Pancreas (tissue), 10 donors: ENCODE measurements at regions of chr11 and their contacts with region 1.

Region 1: DNA sequence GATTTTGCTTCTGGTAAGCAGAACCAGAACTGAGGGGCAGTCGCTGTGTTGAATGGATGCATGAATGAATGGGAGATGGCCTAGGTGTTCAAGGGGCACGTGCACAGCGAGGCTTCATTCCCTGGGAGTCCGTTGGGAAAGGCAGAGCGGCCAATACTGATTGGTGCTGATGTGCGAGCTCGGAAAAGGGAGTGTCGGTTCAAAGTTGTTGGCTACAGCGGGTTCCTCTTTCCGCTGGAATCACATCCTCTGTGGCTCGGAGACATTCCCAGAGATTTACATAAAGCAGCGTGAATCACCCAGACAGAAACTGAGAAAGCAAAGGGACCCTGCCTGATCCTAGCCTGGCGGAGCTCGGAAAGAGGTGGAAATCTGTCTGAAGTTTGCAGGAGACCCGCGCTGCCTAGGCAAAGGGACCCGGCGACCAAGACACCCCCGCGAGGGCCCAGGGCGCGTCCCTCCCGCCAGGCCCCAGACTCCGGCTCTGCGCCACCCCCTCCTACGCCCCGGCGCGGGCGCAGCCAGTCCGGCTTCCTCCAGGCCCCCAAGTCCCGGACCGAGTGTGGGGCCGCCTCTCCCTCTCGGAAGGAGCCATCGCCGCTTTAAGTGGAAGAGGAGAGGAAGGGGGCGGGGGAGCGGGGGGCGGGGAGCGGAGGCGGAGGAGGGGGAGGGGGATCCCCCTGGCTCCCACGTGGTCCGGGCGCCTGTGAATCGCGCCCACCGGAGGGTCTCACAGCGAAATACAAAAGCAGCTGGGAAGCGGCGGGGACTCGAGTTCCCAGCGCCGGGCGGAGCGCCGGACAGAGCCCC is at the start of gene FJX1:
- DNase-seq: peak; percentile 28 to 76 (median 52)
- ATAC-seq: peak; percentile 32 to 60 (median 54)
- H3K4me3 ChIP-seq: peak within 1 kb of the TSS; percentile 48 to 70 (median 58)
- H3K27ac ChIP-seq: peak within 1 kb of the TSS in 3 of 4 donors; percentile 28 to 70 (median 68)
- H3K4me1 ChIP-seq: peaks cover 0 to 12% (median 0%) of the 10 kb centered on the region in 3 donors
- H3K27me3 ChIP-seq: no peaks in the 10 kb centered on the region
- CTCF ChIP-seq: no peak
- total RNA-seq, gene FJX1: 2.2 to 13.3 (median 3.8) TPM

Region 2: DNA sequence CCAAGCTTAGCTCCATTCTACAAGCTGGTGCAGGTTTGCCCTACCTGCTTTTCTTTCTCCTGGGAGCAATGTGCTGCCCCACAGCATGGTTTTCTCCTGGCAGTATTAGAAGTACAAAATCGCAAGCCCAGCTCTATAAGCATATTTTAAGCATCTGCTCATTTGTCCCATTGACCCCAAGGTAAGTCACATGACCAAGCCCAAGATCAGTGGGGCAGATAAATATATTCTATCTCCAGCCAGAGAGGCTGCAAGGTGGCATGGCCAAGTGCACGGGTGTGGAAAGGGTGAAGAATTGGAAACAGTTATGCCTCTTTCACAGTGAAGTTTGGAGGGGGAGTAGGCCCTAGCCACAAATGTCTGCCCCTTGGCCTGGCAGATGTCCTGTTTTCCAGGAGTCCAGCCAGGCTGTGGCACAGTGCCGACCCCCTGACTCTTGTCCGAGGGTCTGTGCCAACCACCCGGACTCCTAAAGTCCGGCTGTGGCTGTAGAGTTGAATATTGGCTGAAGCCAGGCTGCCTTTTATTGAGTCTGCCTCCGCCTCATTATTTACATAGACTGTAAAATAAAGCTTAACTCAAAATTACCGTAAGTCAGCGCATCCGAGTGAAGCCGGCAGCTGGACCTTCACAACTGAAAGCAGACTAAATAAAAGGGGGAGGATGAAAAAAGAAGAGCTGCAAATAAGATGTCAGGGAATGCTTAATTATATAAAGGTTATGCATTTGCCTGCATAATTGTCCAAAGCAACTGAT is 505.6 kb after region 1 on chr11:
- intact Hi-C with region 1: loop called in 1 of 3 experiments (anchors 10 kb)
- DNase-seq: no peak
- ATAC-seq: peak in 1 of 4 donors; percentile 63
- H3K4me3 ChIP-seq: no peak overlapping the region
- H3K27ac ChIP-seq: no peak overlapping the region
- H3K4me1 ChIP-seq: no peaks in the 10 kb centered on the region
- H3K27me3 ChIP-seq: no peaks in the 10 kb centered on the region
- CTCF ChIP-seq: no peak

Region 3: DNA sequence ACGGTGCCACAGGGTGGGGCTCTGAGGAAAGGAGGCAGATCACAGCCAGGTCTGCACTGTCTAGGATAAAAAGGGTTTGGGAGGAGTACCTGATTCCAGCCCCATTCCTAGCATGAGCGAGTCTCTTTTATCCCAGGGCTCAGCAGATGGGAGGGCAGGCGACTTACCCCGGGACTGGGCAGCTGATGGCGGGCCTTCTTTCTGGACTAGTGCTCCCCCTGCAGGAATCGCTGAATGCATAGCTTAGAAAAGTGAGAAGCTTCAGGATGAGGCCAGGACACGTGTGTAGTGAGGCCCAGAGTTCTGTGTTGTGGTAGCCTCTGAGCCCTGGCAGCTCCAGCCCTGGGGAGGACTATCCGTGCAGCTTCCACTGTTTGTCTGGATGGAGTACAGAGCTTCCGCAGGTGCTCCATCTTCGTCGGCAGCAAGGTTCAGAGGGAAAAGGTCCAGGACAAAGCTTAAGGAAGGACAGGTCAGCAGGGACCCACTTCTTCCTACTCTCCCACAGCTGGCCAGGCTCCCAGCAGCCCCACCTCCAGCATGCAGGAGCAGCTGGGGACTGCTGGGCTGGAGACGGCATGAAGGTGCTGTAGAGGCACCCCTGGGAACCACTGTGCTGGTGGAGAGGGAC is 641.0 kb after region 1 on chr11:
- intact Hi-C with region 1: loop called (anchors 5 to 10 kb)
- DNase-seq: peak in 5 of 6 donors; percentile 25 to 67 (median 48)
- ATAC-seq: peak; percentile 68 to 96 (median 90)
- H3K4me3 ChIP-seq: no peak overlapping the region
- H3K27ac ChIP-seq: no peak overlapping the region
- H3K4me1 ChIP-seq: no peaks in the 10 kb centered on the region
- H3K27me3 ChIP-seq: no peaks in the 10 kb centered on the region
- CTCF ChIP-seq: peak in 3 of 4 donors; percentile 17 to 40 (median 36)

Region 4: DNA sequence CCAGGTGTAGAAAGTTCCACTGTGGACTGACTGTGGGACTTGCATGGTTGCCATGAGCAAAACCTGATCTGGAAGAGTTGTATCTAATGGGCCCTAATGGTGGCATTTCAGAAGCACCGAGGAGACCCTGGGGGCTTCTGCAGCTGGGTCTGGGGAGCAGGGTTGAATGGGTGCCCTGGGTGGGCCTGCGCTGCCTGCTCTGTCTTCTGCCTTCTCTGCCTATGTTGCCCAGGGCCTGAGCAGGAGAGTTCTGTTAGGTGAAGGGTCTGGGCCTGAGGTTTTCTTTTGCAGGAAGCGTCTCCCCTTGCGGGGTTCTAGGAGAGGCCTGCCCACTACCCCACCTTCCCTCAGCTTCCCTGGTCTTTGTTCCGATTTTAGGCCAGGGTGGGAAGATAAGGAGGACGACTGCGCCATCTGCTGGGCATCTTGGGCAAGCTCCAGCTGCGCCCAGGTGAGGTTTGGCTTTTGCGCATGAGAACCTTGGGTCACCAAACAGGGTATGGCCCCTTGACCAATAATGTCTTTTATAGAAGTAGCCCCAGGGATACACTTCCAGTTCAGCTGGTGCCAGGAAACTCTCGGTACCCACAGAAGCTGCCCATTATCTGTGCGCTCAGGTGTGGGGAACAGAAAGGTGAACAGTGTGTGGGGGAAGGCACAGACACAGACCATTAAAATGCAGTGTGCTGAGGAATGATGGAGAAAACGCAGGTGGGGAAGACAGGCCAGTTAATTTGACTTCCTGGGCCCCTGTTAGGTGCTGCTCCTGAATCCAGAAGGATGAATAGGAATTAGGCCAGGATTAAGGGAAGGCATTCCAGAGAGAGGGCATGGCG is 648.1 kb after region 1 on chr11:
- intact Hi-C with region 1: loop called in 2 of 3 experiments (anchors 5 to 10 kb)
- DNase-seq: peak in 4 of 6 donors; percentile 28 to 84 (median 66)
- ATAC-seq: peak; percentile 79 to 84 (median 83)
- H3K4me3 ChIP-seq: no peak overlapping the region
- H3K27ac ChIP-seq: peak overlapping the region in 1 of 4 donors; percentile 6
- H3K4me1 ChIP-seq: peaks cover 3 to 23% (median 10%) of the 10 kb centered on the region in 3 donors
- H3K27me3 ChIP-seq: no peaks in the 10 kb centered on the region
- CTCF ChIP-seq: peak; percentile 69 to 83 (median 78)